SK-N-SH (cell line): ENCODE measurements at regions of chr12 and their contacts with region 1.

Region 1: DNA sequence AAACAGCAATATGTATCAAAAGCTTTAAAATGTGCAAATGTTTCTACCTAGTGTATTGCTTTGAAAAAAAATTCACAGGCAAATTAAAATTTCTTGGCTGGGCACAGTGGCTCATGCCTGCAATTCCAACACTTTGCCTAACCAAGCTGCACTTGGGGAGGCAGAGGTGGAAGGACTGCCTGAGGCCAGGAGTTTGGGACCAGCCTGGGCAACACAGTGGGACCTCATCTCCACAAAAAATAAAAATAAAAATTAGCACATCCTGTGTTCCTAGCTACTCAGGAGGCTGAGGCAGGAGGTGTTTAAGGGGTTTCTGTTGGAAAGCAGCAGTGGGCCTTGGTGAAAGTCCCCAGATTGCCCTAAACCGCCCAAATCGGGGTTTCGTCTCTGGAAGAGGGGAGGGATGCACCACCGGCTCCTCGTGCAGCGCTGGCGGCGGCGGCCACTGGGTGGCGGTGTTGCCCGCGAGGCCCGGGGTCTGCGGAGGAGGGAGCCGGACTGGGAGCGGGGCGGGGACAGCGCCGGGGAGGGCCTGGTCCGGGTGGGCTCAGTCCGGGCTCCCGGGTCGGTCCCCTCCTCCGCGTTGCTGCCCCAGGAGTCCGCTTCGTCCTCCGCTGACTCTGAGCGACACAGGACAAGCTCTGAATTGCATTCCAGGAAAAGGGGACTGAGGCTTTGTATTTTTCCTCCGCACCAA is 265.6 kb downstream of the AACS start:
- DNase-seq: peak; percentile 93
- H3K4me3 ChIP-seq: peak overlapping the region; percentile 47 to 56
- H3K27ac ChIP-seq: no peak overlapping the region
- H3K4me1 ChIP-seq: no peaks in the 10 kb centered on the region; a peak in 1 of 4 replicates
- H3K27me3 ChIP-seq: no peaks in the 10 kb centered on the region
- CTCF ChIP-seq: peak; percentile 79
- EP300 ChIP-seq: no peak
- RAD21 ChIP-seq: peak; percentile 65

Region 2: GRCh38 chr12:124767066-124767821 is 563.5 kb before region 1 on chr12:
- CTCF ChIA-PET with region 1: no interaction called
- POLR2A ChIA-PET with region 1: no interaction called
- DNase-seq: peak; percentile 95
- H3K4me3 ChIP-seq: peak overlapping the region in 1 of 2 experiments; percentile 32; a peak in 1 of 4 replicates
- H3K27ac ChIP-seq: 0 out of 4 replicates have a peak overlapping the region, but pooled peaks of 1 of the 2 experiments have one; percentile 3
- H3K4me1 ChIP-seq: peaks cover 4 to 5% of the 10 kb centered on the region in 2 experiments; a peak in 2 of 4 replicates
- H3K27me3 ChIP-seq: no peaks in the 10 kb centered on the region
- CTCF ChIP-seq: peak; percentile 98
- EP300 ChIP-seq: no peak
- RAD21 ChIP-seq: peak; percentile 95

Region 3: GRCh38 chr12:125320177-125320576 is 10.6 kb before region 1 on chr12:
- CTCF ChIA-PET with region 1: interaction called, 14 read pairs
- POLR2A ChIA-PET with region 1: no interaction called
- DNase-seq: no peak
- H3K4me3 ChIP-seq: no peak overlapping the region
- H3K27ac ChIP-seq: no peak overlapping the region
- H3K4me1 ChIP-seq: no peaks in the 10 kb centered on the region
- H3K27me3 ChIP-seq: no peaks in the 10 kb centered on the region
- CTCF ChIP-seq: no peak
- EP300 ChIP-seq: no peak
- RAD21 ChIP-seq: no peak

Region 4: GRCh38 chr12:125346362-125346761 is 15.6 kb after region 1 on chr12:
- CTCF ChIA-PET with region 1: interaction called, 20 read pairs
- POLR2A ChIA-PET with region 1: no interaction called
- DNase-seq: no peak
- H3K4me3 ChIP-seq: no peak overlapping the region
- H3K27ac ChIP-seq: no peak overlapping the region
- H3K4me1 ChIP-seq: no peaks in the 10 kb centered on the region
- H3K27me3 ChIP-seq: no peaks in the 10 kb centered on the region
- CTCF ChIP-seq: no peak
- EP300 ChIP-seq: no peak
- RAD21 ChIP-seq: no peak

Region 5: DNA sequence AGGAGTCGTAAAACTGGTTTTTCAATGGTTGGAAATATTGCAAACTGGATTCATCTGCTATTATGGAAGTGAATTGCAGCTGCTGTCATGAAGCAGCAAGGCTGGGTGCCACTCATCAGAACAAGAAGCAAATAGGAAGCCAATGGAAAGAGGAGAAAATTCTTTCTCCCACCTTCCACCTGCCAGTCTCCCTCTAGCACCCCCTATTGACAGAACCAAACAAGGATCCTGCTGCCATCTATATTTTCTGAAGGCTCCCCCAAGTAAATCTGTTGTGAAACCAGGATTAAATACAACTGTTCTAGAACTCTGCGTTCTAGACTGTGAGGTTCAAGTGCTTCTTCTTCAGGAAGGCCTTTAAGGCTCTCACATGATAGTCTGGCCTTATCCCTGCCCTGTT is 21.0 kb after region 1 on chr12:
- CTCF ChIA-PET with region 1: interaction called, 11 read pairs
- POLR2A ChIA-PET with region 1: no interaction called
- DNase-seq: no peak
- H3K4me3 ChIP-seq: no peak overlapping the region
- H3K27ac ChIP-seq: no peak overlapping the region
- H3K4me1 ChIP-seq: no peaks in the 10 kb centered on the region
- H3K27me3 ChIP-seq: no peaks in the 10 kb centered on the region
- CTCF ChIP-seq: no peak
- EP300 ChIP-seq: no peak
- RAD21 ChIP-seq: no peak